CD4-positive, alpha-beta memory T cell (primary cell): ENCODE measurements at regions of chr7 and their contacts with region 1.

Region 1: GRCh38 chr7:134605973-134606923 is 40.4 kb upstream of the BPGM start:
- DNase-seq: peak; percentile 45 to 65 (median 48)
- H3K4me3 ChIP-seq: no peak overlapping the region
- H3K4me3 Mint-ChIP-seq: peak overlapping the region; percentile 26 to 80 (median 63)
- H3K27ac ChIP-seq: no peak overlapping the region
- H3K27ac Mint-ChIP-seq: peak overlapping the region in 1 of 7 donors; percentile 15
- H3K4me1 ChIP-seq: no peaks in the 10 kb centered on the region
- H3K4me1 Mint-ChIP-seq: peaks cover 0 to 4% (median 3%) of the 10 kb centered on the region in 4 donors
- H3K27me3 ChIP-seq: no peaks in the 10 kb centered on the region
- H3K27me3 Mint-ChIP-seq: peaks cover 18 to 30% of the 10 kb centered on the region in 2 donors

Region 2: GRCh38 chr7:134514663-134515062 is 91.6 kb before region 1 on chr7:
- CTCF ChIA-PET with region 1: interaction called, 4 read pairs
- POLR2A ChIA-PET with region 1: no interaction called
- intact Hi-C with region 1: loop called (anchors 1 kb)
- DNase-seq: peak in 4 of 5 donors; percentile 45 to 60 (median 55)
- H3K4me3 ChIP-seq: no peak overlapping the region
- H3K4me3 Mint-ChIP-seq: peak overlapping the region in 1 of 8 donors; percentile 63
- H3K27ac ChIP-seq: no peak overlapping the region
- H3K27ac Mint-ChIP-seq: no peak overlapping the region
- H3K4me1 ChIP-seq: no peaks in the 10 kb centered on the region
- H3K4me1 Mint-ChIP-seq: peaks cover 0 to 5% (median 3%) of the 10 kb centered on the region in 4 donors
- H3K27me3 ChIP-seq: no peaks in the 10 kb centered on the region
- H3K27me3 Mint-ChIP-seq: peaks cover 4 to 21% of the 10 kb centered on the region in 2 donors

Region 3: DNA sequence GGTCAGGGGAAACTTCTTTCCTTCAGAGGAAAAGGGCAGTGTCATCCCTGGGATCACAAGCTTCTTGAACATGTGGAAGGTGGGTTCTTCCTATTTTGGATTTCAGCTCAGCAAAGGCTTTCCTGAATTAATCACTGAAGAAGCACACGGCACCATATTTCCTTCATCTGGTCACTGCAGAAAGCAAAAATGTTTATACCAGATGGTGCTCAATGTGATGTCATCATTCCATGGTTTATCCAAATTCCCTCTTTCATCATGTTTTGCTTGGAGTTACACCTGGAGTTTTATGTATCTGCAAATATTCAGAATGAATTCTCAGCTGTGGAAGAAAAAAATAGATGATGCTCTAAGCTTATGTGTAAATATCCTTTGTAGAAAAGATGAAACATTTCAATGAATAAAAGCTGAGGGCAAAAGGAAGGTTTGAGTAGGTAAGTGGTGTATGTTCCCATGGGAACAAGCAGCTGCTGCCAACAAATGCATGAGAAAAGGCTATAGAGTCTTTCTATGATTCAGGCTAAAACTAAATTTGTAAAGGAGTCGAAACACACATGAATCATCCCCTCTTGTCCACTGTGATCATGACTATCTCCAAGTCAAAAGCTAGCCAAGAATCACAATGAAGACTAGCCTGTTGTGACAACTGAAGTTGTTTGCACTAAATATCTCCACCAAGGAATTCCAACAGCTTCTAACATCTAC is 13.5 kb after region 1 on chr7:
- CTCF ChIA-PET with region 1: interaction called, 53 read pairs
- POLR2A ChIA-PET with region 1: no interaction called
- intact Hi-C with region 1: no loop called
- DNase-seq: no peak
- H3K4me3 ChIP-seq: no peak overlapping the region
- H3K4me3 Mint-ChIP-seq: no peak overlapping the region
- H3K27ac ChIP-seq: no peak overlapping the region
- H3K27ac Mint-ChIP-seq: no peak overlapping the region
- H3K4me1 ChIP-seq: no peaks in the 10 kb centered on the region
- H3K4me1 Mint-ChIP-seq: no peaks in the 10 kb centered on the region
- H3K27me3 ChIP-seq: peaks cover 9% of the 10 kb centered on the region
- H3K27me3 Mint-ChIP-seq: peaks cover 18 to 26% of the 10 kb centered on the region in 2 donors

Region 4: GRCh38 chr7:136150311-136150710 is 1544.1 kb after region 1 on chr7:
- CTCF ChIA-PET with region 1: no interaction called
- POLR2A ChIA-PET with region 1: no interaction called
- intact Hi-C with region 1: no loop called
- DNase-seq: no peak
- H3K4me3 ChIP-seq: no peak overlapping the region
- H3K4me3 Mint-ChIP-seq: no peak overlapping the region
- H3K27ac ChIP-seq: no peak overlapping the region
- H3K27ac Mint-ChIP-seq: no peak overlapping the region
- H3K4me1 ChIP-seq: no peaks in the 10 kb centered on the region
- H3K4me1 Mint-ChIP-seq: no peaks in the 10 kb centered on the region
- H3K27me3 ChIP-seq: no peaks in the 10 kb centered on the region
- H3K27me3 Mint-ChIP-seq: no peaks in the 10 kb centered on the region